ENCODE measurements at regions of chr1 and their contacts with region 1.

Region 1: DNA sequence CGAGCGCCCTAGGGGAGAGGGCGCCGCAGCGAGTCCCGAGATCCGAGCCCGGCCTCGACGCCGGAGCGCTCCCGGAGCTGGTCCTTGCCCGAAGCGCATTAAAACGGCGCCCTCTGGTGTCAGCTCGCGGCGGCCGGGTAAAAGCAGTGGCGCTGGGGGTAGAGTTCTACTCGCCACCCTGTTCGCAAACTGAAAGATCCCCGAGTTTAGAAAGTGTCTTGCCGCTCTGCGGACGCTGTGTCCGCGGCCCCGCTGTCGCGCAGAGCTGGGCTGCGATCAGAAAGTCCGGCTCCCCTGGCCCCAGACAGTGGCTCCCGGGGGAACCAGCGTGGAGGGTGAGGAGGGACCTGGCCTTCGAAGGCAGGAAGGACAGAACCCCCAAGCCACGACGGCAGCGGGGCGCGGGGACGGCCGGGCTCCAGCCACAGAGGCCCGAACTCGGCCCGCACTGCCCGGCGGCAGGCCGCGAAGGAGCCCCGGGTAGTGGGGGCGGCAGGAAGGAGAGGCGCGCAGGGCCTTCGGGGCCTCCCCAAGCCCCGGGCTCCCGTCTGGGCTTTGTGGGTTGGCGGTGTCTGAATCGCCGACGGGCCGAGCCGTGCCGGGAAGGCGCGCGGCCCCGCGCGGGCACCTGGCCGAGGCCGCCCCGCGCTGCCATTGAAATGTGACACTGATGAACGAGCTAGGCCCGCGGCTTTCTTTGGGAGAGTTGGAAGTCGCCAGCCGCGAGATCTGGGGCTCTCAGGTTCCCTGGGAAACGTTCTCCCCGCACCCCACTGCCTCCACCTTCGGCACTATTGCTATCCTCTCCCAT is 39.1 kb upstream of the NFIA start:
- DNase-seq: peak; percentile 85
- H3K27ac ChIP-seq: 0 out of 2 replicates have a peak overlapping the region, but pooled peaks have one; percentile 1
- CTCF ChIP-seq: peak; percentile 89

Region 2: DNA sequence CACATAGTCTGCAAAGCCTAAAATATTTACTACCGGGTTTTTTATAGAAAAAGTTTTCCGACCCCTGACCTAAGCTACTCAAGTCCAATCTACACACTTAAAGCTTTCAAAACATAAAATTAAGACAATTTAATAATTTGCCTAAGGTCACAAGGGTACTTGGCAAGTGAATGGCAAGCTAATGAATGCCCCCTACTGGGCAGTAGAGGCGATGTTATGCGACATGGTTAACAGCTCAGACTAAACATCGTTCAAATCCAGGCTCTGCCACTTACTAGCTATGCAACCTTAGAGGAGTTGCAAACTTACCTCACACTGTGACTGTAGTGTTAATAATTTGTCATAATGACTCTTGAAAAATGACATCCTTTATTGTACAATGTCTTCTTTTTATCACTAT is 278.0 kb before region 1 on chr1:
- CTCF ChIA-PET with region 1: no interaction called
- POLR2A ChIA-PET with region 1: no interaction called
- DNase-seq: peak; percentile 20
- H3K27ac ChIP-seq: no peak overlapping the region
- CTCF ChIP-seq: peak; percentile 36; the same call in 1 of the 2 replicates

Region 3: DNA sequence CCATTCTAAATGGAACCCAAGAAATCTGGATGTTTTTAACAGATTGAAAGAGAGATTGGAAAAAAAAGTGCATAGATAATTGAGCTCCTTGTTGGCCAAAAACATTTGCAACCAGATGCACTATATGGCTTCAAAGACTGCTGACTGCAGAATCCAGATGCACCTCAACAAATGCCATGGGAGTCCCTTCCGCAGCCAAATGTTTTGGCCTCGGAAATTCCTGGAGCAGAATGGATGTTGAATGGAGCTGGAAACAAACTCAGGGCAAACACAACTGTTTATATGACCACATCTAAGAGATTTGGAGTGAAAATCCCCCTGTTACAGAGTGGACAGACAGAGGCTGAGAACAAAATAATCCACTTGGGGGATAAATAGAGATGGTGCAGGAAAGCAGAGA is 245.9 kb before region 1 on chr1:
- CTCF ChIA-PET with region 1: no interaction called
- POLR2A ChIA-PET with region 1: interaction called, 10 read pairs
- DNase-seq: no peak
- H3K27ac ChIP-seq: no peak overlapping the region
- CTCF ChIP-seq: no peak

Region 4: DNA sequence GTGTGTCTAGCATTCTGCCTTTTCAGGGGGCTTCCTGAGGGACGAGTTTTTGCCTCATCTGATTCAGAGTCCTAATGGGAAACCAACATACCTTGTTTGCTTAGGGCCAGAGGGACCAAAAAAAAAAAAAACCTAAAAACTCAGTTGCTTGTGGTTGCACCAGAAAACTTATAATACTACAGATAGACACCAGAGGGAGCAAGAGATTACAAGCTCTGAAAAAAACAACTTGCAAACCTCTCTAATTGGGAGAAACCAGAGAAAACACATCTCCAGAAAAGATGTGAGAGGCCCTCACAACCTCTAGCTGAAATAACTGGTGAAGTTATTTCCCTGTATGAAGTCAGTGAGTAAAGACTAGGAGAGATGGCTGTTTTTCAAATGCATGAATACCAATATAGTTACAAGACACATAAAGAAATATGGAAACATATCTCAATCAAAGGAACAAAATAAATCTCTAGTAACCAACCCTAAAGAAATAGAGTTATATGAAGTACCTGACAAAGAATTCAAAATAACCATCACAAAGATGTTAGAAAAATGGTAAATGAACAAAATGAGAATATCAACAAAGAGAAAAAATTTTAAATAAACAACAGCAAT is 194.5 kb before region 1 on chr1:
- CTCF ChIA-PET with region 1: interaction called, 12 read pairs
- POLR2A ChIA-PET with region 1: no interaction called
- DNase-seq: peak; percentile 17
- H3K27ac ChIP-seq: no peak overlapping the region
- CTCF ChIP-seq: peak; percentile 59

Region 5: DNA sequence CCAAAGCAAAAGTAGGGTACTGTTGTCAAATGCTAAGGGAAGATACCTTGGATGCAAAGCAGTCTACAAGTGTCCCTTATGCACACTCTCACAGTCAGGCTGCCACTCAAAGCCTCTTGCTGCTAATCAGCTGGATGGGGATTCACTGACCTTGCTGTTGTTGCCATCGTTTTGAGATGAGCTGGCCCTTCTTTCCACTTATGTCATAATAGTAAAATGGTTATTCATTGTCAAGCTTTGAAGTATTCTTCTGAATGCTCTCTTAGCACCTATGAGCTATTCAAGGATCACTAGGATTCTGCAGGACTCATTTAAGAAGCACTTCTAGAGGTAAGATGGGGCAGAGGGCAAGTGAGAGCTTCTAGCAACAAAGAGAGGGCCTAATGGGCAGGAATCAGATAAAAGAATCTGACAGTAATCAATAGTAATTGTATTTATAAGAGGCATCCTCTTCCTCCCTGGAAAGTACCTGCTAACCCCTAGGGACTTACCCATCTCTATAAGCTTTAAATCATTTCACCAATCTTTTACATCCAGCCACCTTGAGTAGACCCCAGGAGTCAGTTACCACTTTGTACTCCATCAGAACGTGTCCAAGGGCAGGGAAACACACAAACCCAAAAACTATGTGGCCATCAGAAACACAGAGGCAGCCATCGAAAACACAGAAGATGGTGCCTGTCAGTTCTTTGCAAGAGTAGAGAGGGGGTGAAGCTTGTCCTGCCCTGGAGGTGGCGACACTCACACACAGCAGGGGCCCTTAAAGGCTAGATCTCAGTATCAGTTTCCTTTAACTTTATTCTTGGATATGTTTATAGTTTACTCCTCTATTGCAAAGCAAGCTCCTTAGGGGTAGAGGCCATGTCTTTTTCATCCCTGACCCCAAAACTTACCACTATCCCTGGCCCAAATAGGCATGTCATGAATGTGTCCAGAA is 64.5 kb before region 1 on chr1:
- CTCF ChIA-PET with region 1: interaction called, 11 read pairs
- POLR2A ChIA-PET with region 1: no interaction called
- DNase-seq: peak; percentile 52
- H3K27ac ChIP-seq: no peak overlapping the region
- CTCF ChIP-seq: peak; percentile 76

Region 6: GRCh38 chr1:61259390-61260148 is 216.4 kb after region 1 on chr1:
- CTCF ChIA-PET with region 1: no interaction called
- POLR2A ChIA-PET with region 1: no interaction called
- DNase-seq: no peak
- H3K27ac ChIP-seq: no peak overlapping the region
- CTCF ChIP-seq: no peak

Region 7: DNA sequence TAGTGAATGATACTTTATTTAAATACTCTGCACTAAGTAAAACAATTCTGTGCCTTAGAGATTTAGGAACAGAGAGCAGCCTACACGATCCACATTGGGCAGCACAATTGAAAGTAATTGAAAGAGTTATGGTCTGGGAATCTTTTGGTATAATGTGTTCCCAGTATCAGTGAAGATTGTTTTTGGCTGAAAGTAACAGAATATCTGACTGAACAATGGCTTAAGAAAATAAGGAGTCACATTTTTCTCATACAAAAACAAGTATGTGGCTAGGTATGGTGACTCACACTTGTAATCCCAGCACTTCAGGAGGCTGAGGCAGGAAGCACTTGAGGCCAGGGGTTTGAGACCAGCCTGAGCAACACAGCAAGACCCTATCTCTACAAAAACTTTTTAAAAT is 345.4 kb after region 1 on chr1:
- CTCF ChIA-PET with region 1: no interaction called
- POLR2A ChIA-PET with region 1: no interaction called
- DNase-seq: no peak
- H3K27ac ChIP-seq: no peak overlapping the region
- CTCF ChIP-seq: no peak